Activated T-helper 2 cell treated with anti-CD3 and anti-CD28 coated beads, Interferon-gamma antibody, Interleukin-2, Interleukin-4, amounts not matched to agents 10 μg/mL and 5 μg/mL and 100 μg/mL, durations not matched to agents 14 hours and 24 hours and 36 hours (primary cell): ENCODE measurements at regions of chr6 and their contacts with region 1.

Region 1: GRCh38 chr6:83192871-83193746 is at the starts of genes PGM3 and RWDD2A:
- DNase-seq: peak; percentile 85
- H3K4me3 Mint-ChIP-seq: peak within 1 kb of the TSS; percentile 90
- H3K27ac Mint-ChIP-seq: peak within 1 kb of the TSS; percentile 89
- H3K4me1 Mint-ChIP-seq: peaks cover 17% of the 10 kb centered on the region
- H3K27me3 Mint-ChIP-seq: peaks cover 6% of the 10 kb centered on the region
- total RNA-seq, gene PGM3: 29.2 and 31.3 TPM in 2 replicates
- total RNA-seq, gene RWDD2A: 1.4 and 1.5 TPM in 2 replicates

Region 2: GRCh38 chr6:82430611-82431010 is 762.5 kb before region 1 on chr6:
- intact Hi-C with region 1: no loop called
- DNase-seq: no peak
- H3K4me3 Mint-ChIP-seq: no peak overlapping the region
- H3K27ac Mint-ChIP-seq: no peak overlapping the region
- H3K4me1 Mint-ChIP-seq: no peaks in the 10 kb centered on the region
- H3K27me3 Mint-ChIP-seq: no peaks in the 10 kb centered on the region

Region 3: DNA sequence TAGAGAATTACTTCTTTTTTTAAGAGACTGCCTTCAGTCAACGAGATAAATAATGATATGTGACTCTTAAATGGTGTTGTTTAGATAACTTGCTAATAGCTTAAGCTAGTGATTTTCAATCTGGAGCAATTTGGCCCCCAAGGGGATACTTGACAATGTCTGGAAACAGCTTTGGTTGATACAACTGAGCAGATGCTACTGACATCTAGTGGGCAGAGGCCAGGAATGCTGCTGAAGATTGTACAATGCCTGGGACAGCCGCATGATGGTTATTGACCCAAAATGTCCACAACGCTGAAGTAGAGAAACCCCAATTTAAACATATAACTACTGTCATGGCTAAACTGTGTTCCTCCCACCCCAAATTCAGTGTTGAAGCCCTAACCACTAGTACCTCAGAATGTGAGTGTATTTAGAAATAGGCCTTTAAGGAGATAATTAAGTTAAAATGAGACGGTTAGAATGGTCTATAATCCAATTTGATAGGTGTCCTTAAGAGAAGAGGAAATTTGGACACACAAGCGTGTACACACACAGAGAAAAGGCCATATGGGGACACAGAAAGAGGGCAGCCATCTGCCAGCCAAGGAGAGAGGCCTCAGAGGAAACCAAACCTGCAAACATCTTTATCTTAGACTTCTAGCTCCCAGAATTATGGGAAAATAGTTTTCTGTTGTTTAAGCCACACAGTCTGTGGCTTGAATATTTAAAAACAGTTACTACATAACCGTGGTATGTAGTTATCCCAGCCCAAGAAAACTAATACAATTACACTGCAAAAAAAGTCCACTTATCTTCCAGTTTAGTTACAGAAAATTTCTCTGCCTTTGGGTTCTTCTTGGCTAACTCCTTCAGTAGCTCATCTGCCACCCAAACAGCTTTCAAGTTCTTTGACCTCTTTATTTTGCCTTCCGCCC is 22.3 kb after region 1 on chr6:
- intact Hi-C with region 1: loop called (anchors 2 kb)
- DNase-seq: peak; percentile 24
- H3K4me3 Mint-ChIP-seq: no peak overlapping the region
- H3K27ac Mint-ChIP-seq: no peak overlapping the region
- H3K4me1 Mint-ChIP-seq: no peaks in the 10 kb centered on the region
- H3K27me3 Mint-ChIP-seq: peaks cover 25% of the 10 kb centered on the region